HEK293 (cell line): ENCODE measurements at regions of chr5 and their contacts with region 1.

Region 1: GRCh38 chr5:119435436-119436132 is 16.7 kb upstream of the HSD17B4 start:
- H3K4me3 ChIP-seq: no peak overlapping the region
- H3K27ac ChIP-seq: no peak overlapping the region
- H3K4me1 ChIP-seq: no peaks in the 10 kb centered on the region
- CTCF ChIP-seq: peak; percentile 55

Region 2: DNA sequence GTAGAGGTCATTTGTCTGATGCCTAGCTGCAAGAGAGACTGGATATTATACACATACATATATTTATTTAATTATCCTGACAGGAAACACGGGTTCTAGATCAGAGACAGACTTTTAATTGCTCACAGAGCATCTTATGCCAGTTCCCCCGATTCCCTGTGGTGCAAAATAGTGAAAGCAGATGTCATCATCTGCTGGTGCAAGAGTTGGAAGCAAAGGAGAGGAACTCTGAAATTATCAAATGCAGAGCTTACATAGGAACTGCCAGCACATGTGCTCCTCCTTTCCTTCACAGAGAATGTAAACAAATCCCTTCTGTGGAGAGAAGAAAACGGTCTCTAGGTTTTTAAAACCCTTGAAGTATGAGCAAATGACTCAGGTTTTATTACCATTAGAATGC is 516.6 kb before region 1 on chr5:
- CTCF ChIA-PET with region 1: no interaction called
- POLR2A ChIA-PET with region 1: no interaction called
- H3K4me3 ChIP-seq: no peak overlapping the region
- H3K27ac ChIP-seq: no peak overlapping the region
- H3K4me1 ChIP-seq: no peaks in the 10 kb centered on the region
- CTCF ChIP-seq: no peak

Region 3: DNA sequence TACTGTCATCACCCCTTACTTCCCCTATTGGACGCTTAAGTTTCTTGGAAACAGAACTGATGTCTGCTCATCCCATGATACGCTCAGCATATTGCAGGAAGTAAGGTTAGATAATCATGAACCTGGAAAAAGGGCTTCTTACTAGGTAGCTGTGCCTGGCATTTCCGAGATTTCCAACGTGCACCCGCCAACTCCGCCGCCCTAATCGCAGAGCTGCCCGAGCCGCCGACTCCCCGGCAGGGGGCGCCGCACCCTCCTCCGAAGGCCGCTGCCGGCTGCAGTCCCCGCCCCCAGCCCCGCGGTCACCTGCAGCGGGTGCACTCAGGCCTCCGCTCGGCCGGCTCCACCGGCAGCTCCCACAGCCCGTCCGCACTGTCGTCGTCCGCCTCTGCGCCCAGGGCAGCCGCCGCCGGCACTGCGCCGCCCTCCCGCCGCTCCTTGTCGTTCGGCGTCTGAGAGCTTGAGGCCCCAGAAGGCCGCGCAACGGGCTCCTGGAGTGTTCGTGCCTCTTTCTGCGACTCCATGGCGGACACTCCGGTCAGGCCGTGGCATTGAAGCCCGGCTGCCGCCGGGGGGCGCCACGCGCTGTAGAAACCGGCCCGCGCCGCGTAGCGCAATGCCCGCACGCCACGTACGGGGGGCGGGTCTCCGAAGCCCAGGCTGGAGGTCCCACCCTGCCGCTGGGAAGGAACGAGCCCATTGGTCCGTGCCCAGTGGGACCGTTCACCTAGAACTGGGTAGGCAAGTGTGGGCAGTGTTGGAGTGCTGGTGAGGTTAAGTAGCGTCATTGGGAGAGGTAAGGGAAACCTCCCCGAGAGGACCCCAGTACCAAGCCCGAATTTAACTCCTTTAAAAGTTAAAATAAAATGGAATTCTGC is 447.4 kb before region 1 on chr5 and contains the start of gene DTWD2:
- CTCF ChIA-PET with region 1: interaction called, 24 read pairs
- POLR2A ChIA-PET with region 1: no interaction called
- H3K4me3 ChIP-seq: peak within 1 kb of the TSS; percentile 93
- H3K27ac ChIP-seq: peak within 1 kb of the TSS; percentile 91
- H3K4me1 ChIP-seq: peaks cover 2% of the 10 kb centered on the region; the same call in 1 of the 2 replicates
- CTCF ChIP-seq: peak; percentile 97

Region 4: DNA sequence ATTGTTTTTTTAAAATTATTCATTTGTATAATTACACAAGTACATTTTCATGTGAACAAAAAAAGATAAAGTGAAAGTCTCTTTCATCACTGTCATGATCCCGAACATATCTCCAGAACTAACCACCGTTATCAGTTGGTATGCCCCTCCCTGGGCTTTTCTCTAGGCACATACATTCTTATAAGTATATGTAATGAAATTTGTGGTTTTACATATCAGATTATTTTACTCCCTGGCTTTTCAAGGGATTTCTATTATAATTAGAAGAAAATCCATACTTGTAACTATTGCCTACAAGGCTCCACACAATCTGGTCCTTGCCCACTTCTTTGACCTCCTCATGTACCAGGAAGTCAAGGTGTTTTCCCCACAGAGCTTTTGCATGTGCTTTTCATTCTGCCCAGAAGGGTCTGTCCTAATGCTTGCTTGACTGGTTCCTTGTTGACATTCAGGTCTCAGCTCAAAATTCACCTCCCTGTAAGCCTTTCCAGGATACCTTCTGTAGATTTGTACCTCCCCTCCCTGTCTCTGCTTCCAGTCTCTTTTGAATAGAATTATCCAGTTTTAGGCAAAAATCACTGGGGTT is 17.0 kb before region 1 on chr5:
- CTCF ChIA-PET with region 1: interaction called, 13 read pairs
- POLR2A ChIA-PET with region 1: no interaction called
- H3K4me3 ChIP-seq: no peak overlapping the region
- H3K27ac ChIP-seq: no peak overlapping the region
- H3K4me1 ChIP-seq: peaks cover 5% of the 10 kb centered on the region; the same call in 1 of the 2 replicates
- CTCF ChIP-seq: no peak